ENCODE measurements at regions of chr19 and their contacts with region 1.

Region 1: GRCh38 chr19:45643024-45643926 is 4.1 kb upstream of the EML2 start:
- DNase-seq: peak; percentile 91 to 95
- ATAC-seq: peak in 1 of 2 experiments; percentile 16; a peak in 3 of 6 replicates
- H3K4me3 ChIP-seq: peak overlapping the region; percentile 51; the same call in 2 of the 3 replicates
- H3K27ac ChIP-seq: peak overlapping the region; percentile 88 to 90
- H3K4me1 ChIP-seq: peaks cover 44% of the 10 kb centered on the region
- CTCF ChIP-seq: peak; percentile 99
- EP300 ChIP-seq: no peak
- POLR2A ChIP-seq: no peak
- RAD21 ChIP-seq: peak; percentile 99 to 100

Region 2: DNA sequence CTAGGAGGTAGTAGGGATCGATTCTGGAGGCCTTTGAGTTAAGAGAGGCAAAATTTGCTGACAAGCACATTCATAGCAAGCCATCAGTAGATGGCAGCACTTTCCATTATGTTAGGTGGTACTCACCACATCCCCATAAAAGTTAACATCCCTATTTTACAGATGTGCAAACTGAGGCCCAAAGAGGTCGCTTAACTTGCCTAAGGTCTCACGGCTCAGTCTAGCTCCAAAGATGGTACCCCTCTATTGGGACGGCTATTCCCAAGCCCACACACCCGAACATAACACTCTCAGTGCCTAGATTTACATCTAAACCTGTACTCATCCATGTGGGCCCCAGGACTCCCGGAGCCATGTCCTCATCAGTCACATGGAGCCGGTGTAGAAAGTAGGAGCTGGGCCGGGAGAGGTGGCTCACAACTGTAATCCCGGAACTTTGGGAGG is 196.9 kb before region 1 on chr19:
- CTCF ChIA-PET with region 1: interaction called, 64 read pairs
- POLR2A ChIA-PET with region 1: no interaction called
- DNase-seq: peak in 1 of 2 experiments; percentile 83
- ATAC-seq: no peak
- H3K4me3 ChIP-seq: no peak overlapping the region
- H3K27ac ChIP-seq: no peak overlapping the region
- H3K4me1 ChIP-seq: peaks cover 40% of the 10 kb centered on the region
- CTCF ChIP-seq: peak; percentile 79
- EP300 ChIP-seq: no peak
- POLR2A ChIP-seq: no peak
- RAD21 ChIP-seq: peak; percentile 63

Region 3: DNA sequence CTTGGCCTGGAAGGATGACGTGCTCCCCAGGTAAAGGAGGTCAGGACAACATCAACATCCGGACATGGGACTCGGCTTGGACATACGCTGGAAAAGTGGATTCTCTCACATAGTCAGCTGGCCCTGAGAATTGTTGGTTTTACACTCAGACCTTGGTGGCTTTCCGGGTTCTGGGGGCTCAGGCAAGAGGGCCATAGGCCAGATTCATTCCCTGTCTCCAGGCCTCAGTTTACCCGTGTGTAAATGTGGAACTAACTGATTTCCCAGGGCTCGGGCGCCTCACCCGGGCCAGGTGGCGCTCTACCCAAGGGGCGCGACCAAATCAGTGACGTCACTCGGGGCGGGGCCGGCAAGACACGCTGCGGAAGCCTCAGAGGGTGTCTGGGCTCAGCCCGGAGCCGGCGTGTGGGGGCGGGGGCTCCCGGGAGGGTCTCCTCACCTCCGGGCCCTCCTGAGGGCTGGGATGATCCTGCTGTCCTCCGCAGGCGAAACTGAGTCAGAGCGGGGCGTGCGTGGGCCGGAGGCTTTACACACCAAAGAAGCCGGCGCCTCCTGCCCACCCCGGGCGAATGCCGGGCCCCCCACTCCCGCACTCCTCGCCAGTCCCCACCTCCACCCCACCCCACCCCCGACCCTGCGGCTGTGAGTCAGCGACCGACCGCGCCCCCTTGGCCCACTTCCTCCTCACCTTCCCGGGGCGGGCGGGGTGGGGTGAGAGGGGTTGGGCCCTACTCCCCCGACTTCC is 136.9 kb before region 1 on chr19:
- CTCF ChIA-PET with region 1: interaction called, 43 read pairs
- POLR2A ChIA-PET with region 1: interaction called, 7 read pairs
- DNase-seq: peak; percentile 97 to 98
- ATAC-seq: peak; percentile 79 to 80
- H3K4me3 ChIP-seq: peak overlapping the region; percentile 70
- H3K27ac ChIP-seq: peak overlapping the region; percentile 99
- H3K4me1 ChIP-seq: peaks cover 28% of the 10 kb centered on the region
- CTCF ChIP-seq: peak; percentile 81
- EP300 ChIP-seq: peak; percentile 17 to 30; a peak in 1 of 5 replicates
- POLR2A ChIP-seq: peak; percentile 78
- RAD21 ChIP-seq: peak; percentile 48 to 59

Region 4: DNA sequence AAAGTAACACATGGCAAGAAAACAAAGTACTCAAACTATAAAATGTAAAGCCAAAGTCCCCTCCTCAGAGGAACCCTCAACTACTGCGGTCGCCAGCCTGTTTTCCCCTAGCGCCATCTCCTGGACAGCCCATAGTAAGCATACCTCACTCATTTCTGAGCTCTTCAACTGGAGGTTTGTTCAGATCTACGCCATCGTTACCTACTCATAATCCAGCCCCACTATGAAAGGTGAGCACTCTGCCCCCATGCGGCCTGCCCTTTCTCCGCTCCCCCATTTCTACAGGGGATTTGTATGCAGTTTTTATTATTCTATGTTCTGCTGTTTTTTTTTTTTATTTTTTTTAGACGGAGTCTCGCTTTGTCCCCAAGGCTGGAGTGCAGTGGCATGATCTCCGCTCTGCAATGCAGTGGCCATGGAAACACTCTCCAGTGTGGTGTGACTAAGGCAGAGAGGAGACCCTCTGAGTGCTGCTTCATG is 84.8 kb before region 1 on chr19:
- CTCF ChIA-PET with region 1: interaction called, 22 read pairs
- POLR2A ChIA-PET with region 1: interaction called, 6 read pairs
- DNase-seq: peak; percentile 81 to 83
- ATAC-seq: peak; percentile 81 to 93
- H3K4me3 ChIP-seq: no peak overlapping the region
- H3K27ac ChIP-seq: no peak overlapping the region
- H3K4me1 ChIP-seq: no peaks in the 10 kb centered on the region
- CTCF ChIP-seq: peak; percentile 74
- EP300 ChIP-seq: no peak
- POLR2A ChIP-seq: no peak
- RAD21 ChIP-seq: peak; percentile 71 to 77

Region 5: GRCh38 chr19:45591004-45591637 is 52.2 kb before region 1 on chr19:
- CTCF ChIA-PET with region 1: interaction called, 92 read pairs
- POLR2A ChIA-PET with region 1: interaction called, 3 read pairs
- DNase-seq: peak; percentile 80 to 85
- ATAC-seq: peak; percentile 83 to 93
- H3K4me3 ChIP-seq: no peak overlapping the region
- H3K27ac ChIP-seq: peak overlapping the region in 1 of 2 experiments; percentile 39; a peak in 1 of 6 replicates
- H3K4me1 ChIP-seq: 0 out of 3 replicates have a peak, but pooled peaks cover 4% of the 10 kb centered on the region
- CTCF ChIP-seq: peak; percentile 67
- EP300 ChIP-seq: no peak
- POLR2A ChIP-seq: no peak
- RAD21 ChIP-seq: peak; percentile 84 to 96

Region 6: GRCh38 chr19:45657520-45658167 is 14.4 kb after region 1 on chr19:
- CTCF ChIA-PET with region 1: interaction called, 38 read pairs
- POLR2A ChIA-PET with region 1: interaction called, 3 read pairs
- DNase-seq: no peak
- ATAC-seq: peak; percentile 8 to 33; a peak in 3 of 6 replicates
- H3K4me3 ChIP-seq: no peak overlapping the region
- H3K27ac ChIP-seq: no peak overlapping the region
- H3K4me1 ChIP-seq: no peaks in the 10 kb centered on the region
- CTCF ChIP-seq: no peak
- EP300 ChIP-seq: no peak
- POLR2A ChIP-seq: no peak
- RAD21 ChIP-seq: no peak

Region 7: DNA sequence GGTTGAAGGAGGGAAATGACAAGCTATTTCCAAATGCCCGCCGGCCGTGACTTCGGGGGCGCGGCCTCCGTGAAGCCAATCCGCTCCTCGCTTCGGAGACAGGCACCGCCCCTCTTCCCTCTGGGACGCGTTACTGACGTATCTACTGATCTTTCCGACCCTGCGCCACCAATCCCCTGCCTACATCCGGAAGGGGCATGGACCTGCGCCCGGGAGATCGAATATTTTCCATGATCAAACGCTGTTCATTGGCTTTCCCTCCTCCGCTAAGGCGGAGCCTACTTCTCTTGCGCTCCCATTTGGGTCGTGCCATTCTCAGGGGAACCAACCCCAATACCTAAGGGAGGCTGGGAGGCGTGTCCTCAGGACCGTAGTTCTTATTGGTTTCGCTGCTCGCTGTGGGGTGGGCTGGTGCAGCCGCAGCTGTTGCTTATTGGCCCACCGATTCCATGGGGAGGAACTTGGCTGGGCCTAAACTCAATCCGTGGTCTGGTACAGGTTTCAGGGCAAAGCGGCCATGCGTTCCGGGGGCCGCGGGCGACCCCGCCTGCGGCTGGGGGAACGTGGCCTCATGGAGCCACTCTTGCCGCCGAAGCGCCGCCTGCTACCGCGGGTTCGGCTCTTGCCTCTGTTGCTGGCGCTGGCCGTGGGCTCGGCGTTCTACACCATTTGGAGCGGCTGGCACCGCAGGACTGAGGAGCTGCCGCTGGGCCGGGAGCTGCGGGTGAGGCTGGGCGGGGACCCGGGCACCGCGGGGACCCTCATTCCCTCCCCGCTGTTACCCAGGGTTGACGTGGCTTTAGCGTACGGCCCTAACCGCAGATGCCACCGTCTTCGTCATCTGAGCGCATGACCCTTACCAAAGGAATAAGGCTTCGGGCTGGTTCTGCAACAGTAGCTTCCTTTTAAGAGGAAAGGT is 49.2 kb after region 1 on chr19 and contains the start of gene QPCTL:
- CTCF ChIA-PET with region 1: interaction called, 17 read pairs
- POLR2A ChIA-PET with region 1: interaction called, 7 read pairs
- DNase-seq: peak; percentile 99 to 100
- ATAC-seq: peak; percentile 91 to 96
- H3K4me3 ChIP-seq: peak within 1 kb of the TSS; percentile 82
- H3K27ac ChIP-seq: peak within 1 kb of the TSS; percentile 88 to 91
- H3K4me1 ChIP-seq: peaks cover 13% of the 10 kb centered on the region
- CTCF ChIP-seq: no peak
- EP300 ChIP-seq: no peak
- POLR2A ChIP-seq: peak; percentile 93
- RAD21 ChIP-seq: no peak
- polyA plus RNA-seq, gene QPCTL: 9.4 and 10.3 TPM in 2 replicates

Region 8: DNA sequence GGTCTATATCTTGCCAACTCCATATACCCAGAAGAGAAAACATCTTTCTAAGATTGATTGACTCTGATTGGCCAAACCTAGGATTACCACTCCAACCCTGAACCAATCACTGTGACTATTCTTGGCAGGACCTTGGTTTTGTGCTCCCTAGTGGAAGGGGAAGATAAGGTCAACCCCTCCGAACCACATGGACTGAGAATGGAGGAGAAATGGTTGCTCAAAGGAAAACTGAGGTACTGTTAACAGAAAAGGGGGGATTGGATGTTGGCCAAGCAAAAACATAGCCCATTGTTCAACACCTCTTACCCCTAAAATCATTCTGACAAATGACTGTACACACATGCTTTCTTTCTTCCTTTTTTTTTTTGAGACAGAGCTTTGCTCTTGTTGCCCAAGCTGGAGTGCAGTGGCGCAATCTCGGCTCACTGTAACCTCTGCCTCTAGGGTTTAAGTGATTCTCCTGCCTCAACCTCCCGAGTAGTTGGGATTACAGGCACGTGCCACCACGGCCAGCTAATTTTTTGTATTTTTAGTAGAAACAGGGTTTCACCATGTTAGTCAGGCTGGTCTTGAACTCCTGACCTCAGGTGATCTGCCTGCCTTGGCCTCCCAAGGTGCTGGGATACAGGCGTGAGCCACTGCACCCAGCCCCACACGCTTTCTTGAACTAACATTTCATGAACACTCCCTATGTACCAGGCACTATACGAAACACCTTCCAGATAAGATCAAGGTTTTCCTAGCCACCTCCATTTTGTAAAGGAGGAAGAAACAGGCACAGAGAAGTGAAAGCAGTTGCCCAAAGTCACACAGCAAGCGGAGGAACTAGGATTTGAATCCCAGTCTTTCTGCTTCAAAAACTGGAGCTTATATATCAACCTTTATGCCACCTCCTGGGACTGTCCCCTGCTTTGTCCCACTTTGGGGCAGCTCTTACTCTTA is 96.5 kb after region 1 on chr19:
- CTCF ChIA-PET with region 1: no interaction called
- POLR2A ChIA-PET with region 1: no interaction called
- DNase-seq: peak in 1 of 2 experiments; percentile 55
- ATAC-seq: peak; percentile 48 to 64; a peak in 3 of 6 replicates
- H3K4me3 ChIP-seq: no peak overlapping the region
- H3K27ac ChIP-seq: no peak overlapping the region
- H3K4me1 ChIP-seq: peaks cover 7% of the 10 kb centered on the region; the same call in 1 of the 3 replicates
- CTCF ChIP-seq: no peak
- EP300 ChIP-seq: no peak
- POLR2A ChIP-seq: no peak
- RAD21 ChIP-seq: no peak

Region 9: GRCh38 chr19:45882652-45883585 is 239.6 kb after region 1 on chr19:
- CTCF ChIA-PET with region 1: no interaction called
- POLR2A ChIA-PET with region 1: no interaction called
- DNase-seq: peak; percentile 95 to 97
- ATAC-seq: peak; percentile 28 to 57
- H3K4me3 ChIP-seq: peak overlapping the region; percentile 70
- H3K27ac ChIP-seq: peak overlapping the region; percentile 95
- H3K4me1 ChIP-seq: peaks cover 45% of the 10 kb centered on the region
- CTCF ChIP-seq: peak; percentile 100
- EP300 ChIP-seq: no peak; a peak in 1 of 5 replicates
- POLR2A ChIP-seq: peak; percentile 61
- RAD21 ChIP-seq: peak; percentile 91 to 94